Psoas muscle (tissue), 8 donors: ENCODE measurements at regions of chr17 and their contacts with region 1.

Region 1: GRCh38 chr17:74417178-74418045 is 14.5 kb upstream of the GPRC5C start:
- DNase-seq: peak; percentile 42 to 64
- ATAC-seq: peak; percentile 89 to 95 (median 92)
- H3K4me3 ChIP-seq: no peak overlapping the region
- H3K27ac ChIP-seq: peak overlapping the region; percentile 85
- H3K4me1 ChIP-seq: peaks cover 18% of the 10 kb centered on the region
- H3K27me3 ChIP-seq: no peaks in the 10 kb centered on the region
- CTCF ChIP-seq: no peak

Region 2: GRCh38 chr17:74457146-74457819 is 39.9 kb after region 1 on chr17:
- intact Hi-C with region 1: loop called in 1 of 2 experiments (anchors 5 kb)
- DNase-seq: peak; percentile 83 to 91
- ATAC-seq: peak; percentile 43 to 62 (median 50)
- H3K4me3 ChIP-seq: peak overlapping the region; percentile 34
- H3K27ac ChIP-seq: peak overlapping the region; percentile 63
- H3K4me1 ChIP-seq: peaks cover 32% of the 10 kb centered on the region
- H3K27me3 ChIP-seq: no peaks in the 10 kb centered on the region
- CTCF ChIP-seq: peak; percentile 93

Region 3: GRCh38 chr17:74712756-74713155 is 295.3 kb after region 1 on chr17 and contains the start of gene CD300LF:
- intact Hi-C with region 1: no loop called
- DNase-seq: peak in 1 of 2 donors; percentile 27
- ATAC-seq: peak in 1 of 4 donors; percentile 30
- H3K4me3 ChIP-seq: no peak within 1 kb of the TSS
- H3K27ac ChIP-seq: no peak within 1 kb of the TSS
- H3K4me1 ChIP-seq: no peaks in the 10 kb centered on the region
- H3K27me3 ChIP-seq: peaks cover 0 to 24% (median 0%) of the 10 kb centered on the region in 3 donors
- CTCF ChIP-seq: no peak
- total RNA-seq, gene CD300LF: 0.32 to 0.39 TPM in 2 of 4 donors, not detected in the others